ENCODE measurements at regions of chr17 and their contacts with region 1.

Region 1: GRCh38 chr17:57833179-57833939 is 16.5 kb downstream of the MRPS23 start:
- DNase-seq: peak; percentile 29 to 68 (median 58)
- ATAC-seq: peak; percentile 86
- H3K4me3 ChIP-seq: peak overlapping the region; percentile 29
- H3K4me3 Mint-ChIP-seq: no peak overlapping the region
- H3K27ac ChIP-seq: peak overlapping the region; percentile 8
- H3K27ac Mint-ChIP-seq: no peak overlapping the region
- H3K4me1 ChIP-seq: no peaks in the 10 kb centered on the region
- H3K4me1 Mint-ChIP-seq: peaks cover 0 to 13% (median 4%) of the 10 kb centered on the region in 7 donors
- H3K27me3 ChIP-seq: no peaks in the 10 kb centered on the region
- H3K27me3 Mint-ChIP-seq: no peaks in the 10 kb centered on the region

Region 2: GRCh38 chr17:57130761-57131461 is 702.4 kb before region 1 on chr17:
- CTCF ChIA-PET with region 1: interaction called, 6 read pairs
- POLR2A ChIA-PET with region 1: no interaction called
- intact Hi-C with region 1: loop called in 1 of 2 experiments (anchors 1 kb)
- DNase-seq: peak; percentile 53 to 82 (median 75)
- ATAC-seq: peak; percentile 96
- H3K4me3 ChIP-seq: no peak overlapping the region
- H3K4me3 Mint-ChIP-seq: peak overlapping the region in 5 of 10 donors; percentile 14 to 53 (median 46)
- H3K27ac ChIP-seq: no peak overlapping the region
- H3K27ac Mint-ChIP-seq: no peak overlapping the region
- H3K4me1 ChIP-seq: peaks cover 0 to 6% of the 10 kb centered on the region in 2 donors
- H3K4me1 Mint-ChIP-seq: peaks cover 4 to 11% (median 8%) of the 10 kb centered on the region in 7 donors
- H3K27me3 ChIP-seq: no peaks in the 10 kb centered on the region
- H3K27me3 Mint-ChIP-seq: no peaks in the 10 kb centered on the region

Region 3: GRCh38 chr17:57597531-57598453 is 235.6 kb before region 1 on chr17:
- CTCF ChIA-PET with region 1: interaction called, 4 read pairs
- POLR2A ChIA-PET with region 1: no interaction called
- intact Hi-C with region 1: loop called (anchors 1 to 2 kb)
- DNase-seq: peak in 2 of 9 donors; percentile 14 to 19
- ATAC-seq: peak; percentile 55
- H3K4me3 ChIP-seq: no peak overlapping the region
- H3K4me3 Mint-ChIP-seq: peak overlapping the region in 5 of 10 donors; percentile 15 to 69 (median 25)
- H3K27ac ChIP-seq: peak overlapping the region; percentile 34
- H3K27ac Mint-ChIP-seq: peak overlapping the region; percentile 66 to 97 (median 94)
- H3K4me1 ChIP-seq: peaks cover 48 to 53% of the 10 kb centered on the region in 2 donors
- H3K4me1 Mint-ChIP-seq: peaks cover 44 to 65% (median 55%) of the 10 kb centered on the region in 7 donors
- H3K27me3 ChIP-seq: no peaks in the 10 kb centered on the region
- H3K27me3 Mint-ChIP-seq: no peaks in the 10 kb centered on the region

Region 4: DNA sequence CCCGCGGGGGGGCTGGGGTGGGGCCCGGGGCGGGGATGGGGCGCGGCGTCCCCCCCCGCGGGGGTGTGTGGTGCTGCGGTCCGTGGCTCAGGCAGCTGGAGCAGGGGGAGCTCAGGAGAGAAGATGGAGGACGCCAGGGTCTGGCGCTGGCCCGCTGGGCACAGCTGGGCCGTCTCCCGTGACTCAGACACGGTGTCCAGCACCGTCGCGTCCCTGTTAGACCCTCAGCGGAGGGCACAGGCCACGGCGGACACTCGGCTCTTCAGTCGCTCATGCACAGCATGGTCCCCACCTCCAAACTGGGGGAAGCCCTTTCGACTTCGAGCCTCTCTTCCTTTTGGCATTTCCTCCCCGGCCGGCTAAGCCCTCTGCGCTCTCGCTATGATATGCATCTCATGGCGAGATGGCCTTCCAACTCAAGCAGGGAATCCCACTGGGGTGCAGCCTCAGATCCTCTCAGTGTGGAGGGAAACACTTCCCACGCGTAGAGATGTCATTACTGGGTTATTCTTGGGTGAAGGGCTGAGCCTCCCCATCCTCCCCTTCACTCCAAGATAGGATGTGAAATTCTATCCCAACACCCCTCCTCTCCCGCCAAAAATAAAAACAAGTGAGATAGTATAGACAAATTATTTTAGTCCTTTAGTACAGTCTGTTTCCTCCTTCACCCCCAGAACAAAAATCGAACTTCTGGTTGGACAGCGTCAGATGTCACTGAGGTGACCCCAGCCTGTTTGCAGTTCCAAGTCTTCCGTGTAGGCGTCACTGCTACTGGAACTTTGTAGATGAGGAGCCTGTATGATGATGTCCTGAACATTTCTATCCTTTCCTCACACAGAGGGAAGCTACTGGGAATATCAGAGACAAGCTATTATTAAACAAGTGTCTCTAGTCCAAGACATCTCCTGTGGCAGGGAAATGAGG is 155.3 kb after region 1 on chr17:
- CTCF ChIA-PET with region 1: no interaction called
- POLR2A ChIA-PET with region 1: no interaction called
- intact Hi-C with region 1: no loop called
- DNase-seq: peak in 7 of 9 donors; percentile 58 to 79 (median 73)
- ATAC-seq: peak; percentile 85
- H3K4me3 ChIP-seq: peak overlapping the region; percentile 94
- H3K4me3 Mint-ChIP-seq: peak overlapping the region; percentile 92 to 96 (median 95)
- H3K27ac ChIP-seq: peak overlapping the region; percentile 87
- H3K27ac Mint-ChIP-seq: peak overlapping the region; percentile 90 to 97 (median 95)
- H3K4me1 ChIP-seq: peaks cover 36 to 43% of the 10 kb centered on the region in 2 donors
- H3K4me1 Mint-ChIP-seq: peaks cover 38 to 81% (median 72%) of the 10 kb centered on the region in 7 donors
- H3K27me3 ChIP-seq: no peaks in the 10 kb centered on the region
- H3K27me3 Mint-ChIP-seq: no peaks in the 10 kb centered on the region

Region 5: GRCh38 chr17:59110973-59111938 is 1277.9 kb after region 1 on chr17:
- CTCF ChIA-PET with region 1: no interaction called
- POLR2A ChIA-PET with region 1: no interaction called
- intact Hi-C with region 1: no loop called
- DNase-seq: no peak
- ATAC-seq: no peak
- H3K4me3 ChIP-seq: no peak overlapping the region
- H3K4me3 Mint-ChIP-seq: no peak overlapping the region
- H3K27ac ChIP-seq: no peak overlapping the region
- H3K27ac Mint-ChIP-seq: peak overlapping the region in 2 of 9 donors; percentile 0 to 50
- H3K4me1 ChIP-seq: peaks cover 5 to 8% of the 10 kb centered on the region in 2 donors
- H3K4me1 Mint-ChIP-seq: peaks cover 0 to 38% (median 12%) of the 10 kb centered on the region in 7 donors
- H3K27me3 ChIP-seq: no peaks in the 10 kb centered on the region
- H3K27me3 Mint-ChIP-seq: no peaks in the 10 kb centered on the region